WTC11 (cell line): ENCODE measurements at regions of chr17 and their contacts with region 1.

Region 1: DNA sequence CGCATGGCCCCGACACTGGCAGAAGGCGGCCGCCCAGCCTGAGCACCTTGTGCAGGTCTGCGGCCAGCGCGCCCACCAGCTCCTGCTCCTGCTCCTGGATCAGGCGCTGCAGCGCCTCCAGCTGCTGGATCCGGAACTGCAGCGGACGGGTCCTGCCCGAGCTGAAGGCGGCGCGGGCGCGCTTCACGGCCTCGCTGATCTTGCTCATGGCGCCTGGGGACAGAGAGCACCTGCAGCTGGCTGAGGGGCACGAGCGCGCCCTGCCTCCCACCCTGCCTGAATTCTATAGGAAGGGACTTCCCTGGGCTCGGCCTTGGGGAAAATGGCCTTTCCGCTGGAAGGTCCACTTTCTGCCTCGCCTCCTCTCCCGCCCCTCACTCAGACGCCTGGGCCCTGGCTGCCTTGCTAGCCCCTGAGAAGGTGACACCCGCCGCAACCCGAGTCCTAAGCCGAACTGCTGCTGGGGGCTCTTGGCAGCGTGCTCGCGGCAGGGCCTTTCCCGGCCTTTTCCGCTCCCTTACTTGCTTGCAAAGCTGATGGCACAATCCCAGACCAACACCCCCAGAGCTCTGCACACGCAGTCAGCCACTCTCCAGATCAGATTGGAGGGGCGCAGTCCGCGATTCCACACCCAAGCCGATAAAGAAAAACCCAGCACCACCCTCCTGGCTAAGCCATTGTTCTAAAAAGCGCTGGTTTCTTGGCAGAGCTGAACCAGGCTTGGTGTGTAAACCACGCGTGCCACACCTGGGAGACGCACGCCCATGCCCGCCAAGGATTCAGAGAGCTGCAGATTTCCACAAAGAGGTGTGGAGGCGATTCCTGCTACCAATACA is 3.0 kb downstream of the ALDH3A1 start:
- DNase-seq: peak; percentile 99
- ATAC-seq: peak; percentile 92
- H3K4me3 Mint-ChIP-seq: peak overlapping the region; percentile 54
- H3K27ac Mint-ChIP-seq: no peak overlapping the region
- H3K4me1 Mint-ChIP-seq: peaks cover 22% of the 10 kb centered on the region
- H3K27me3 Mint-ChIP-seq: peaks cover 13% of the 10 kb centered on the region; the same call in 1 of the 2 replicates
- CTCF ChIP-seq: peak; percentile 97

Region 2: GRCh38 chr17:19377602-19378392 is 367.3 kb before region 1 on chr17:
- CTCF ChIA-PET with region 1: interaction called, 12 read pairs
- POLR2A ChIA-PET with region 1: no interaction called
- DNase-seq: peak; percentile 99
- ATAC-seq: peak; percentile 93
- H3K4me3 Mint-ChIP-seq: peak overlapping the region; percentile 99
- H3K27ac Mint-ChIP-seq: peak overlapping the region; percentile 97
- H3K4me1 Mint-ChIP-seq: peaks cover 16% of the 10 kb centered on the region
- H3K27me3 Mint-ChIP-seq: no peaks in the 10 kb centered on the region
- CTCF ChIP-seq: no peak

Region 3: GRCh38 chr17:19533718-19534561 is 211.2 kb before region 1 on chr17 and contains the start of gene SLC47A1:
- CTCF ChIA-PET with region 1: interaction called, 12 read pairs
- POLR2A ChIA-PET with region 1: interaction called, 3 read pairs
- DNase-seq: peak; percentile 42
- ATAC-seq: peak; percentile 83
- H3K4me3 Mint-ChIP-seq: peak within 1 kb of the TSS; percentile 71
- H3K27ac Mint-ChIP-seq: no peak within 1 kb of the TSS
- H3K4me1 Mint-ChIP-seq: peaks cover 35% of the 10 kb centered on the region
- H3K27me3 Mint-ChIP-seq: peaks cover 43% of the 10 kb centered on the region
- CTCF ChIP-seq: no peak
- total RNA-seq, gene SLC47A1: 2.5 to 3.3 TPM (median 2.9 TPM) in 3 replicates

Region 4: DNA sequence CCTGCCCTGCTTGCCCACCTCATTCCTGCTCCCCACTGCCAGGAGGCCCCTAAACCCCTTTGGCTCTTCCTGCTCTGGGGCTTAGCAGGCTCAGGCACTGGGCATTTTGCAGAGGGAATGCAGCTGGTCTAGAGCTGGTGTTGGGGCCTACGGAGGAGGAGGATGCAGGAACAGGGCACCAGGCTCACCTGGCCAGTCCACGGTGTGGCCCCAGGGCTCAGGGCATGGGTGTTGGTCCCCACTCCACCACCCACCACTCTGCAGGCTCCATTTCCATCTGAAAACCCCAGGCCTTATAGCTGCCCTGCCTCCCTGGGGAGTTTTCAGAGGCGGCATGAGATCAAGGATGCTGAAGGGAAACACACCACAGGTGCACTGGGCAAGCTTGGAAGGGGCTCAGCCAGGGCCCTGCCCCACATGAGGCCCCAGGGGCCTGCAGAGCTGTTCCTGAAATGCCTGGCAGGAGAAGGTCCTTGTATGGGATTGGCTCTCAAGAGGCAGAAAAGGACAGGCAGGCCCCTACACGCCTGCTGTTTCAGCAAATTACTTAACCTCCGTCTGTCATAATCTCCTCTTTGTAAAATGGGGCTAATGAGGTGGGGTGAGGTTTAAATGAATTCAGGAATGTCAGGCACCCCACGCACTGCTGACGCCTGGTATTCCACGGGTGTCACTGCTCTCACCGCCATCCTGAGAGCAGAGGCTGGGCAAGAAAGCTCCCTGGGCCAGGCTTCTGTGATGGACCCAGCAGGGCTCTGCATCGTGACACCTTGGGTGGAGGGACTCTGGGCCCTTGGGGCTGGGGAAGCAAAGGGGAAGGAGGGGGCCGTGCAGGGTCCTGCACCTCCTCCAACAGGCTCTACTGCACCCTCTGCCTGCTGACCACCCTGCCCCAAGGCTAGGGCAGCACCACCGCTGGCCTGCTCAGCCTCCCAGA is 38.1 kb before region 1 on chr17:
- CTCF ChIA-PET with region 1: interaction called, 14 read pairs
- POLR2A ChIA-PET with region 1: no interaction called
- DNase-seq: no peak
- ATAC-seq: no peak
- H3K4me3 Mint-ChIP-seq: no peak overlapping the region
- H3K27ac Mint-ChIP-seq: no peak overlapping the region
- H3K4me1 Mint-ChIP-seq: peaks cover 25% of the 10 kb centered on the region
- H3K27me3 Mint-ChIP-seq: no peaks in the 10 kb centered on the region
- CTCF ChIP-seq: no peak

Region 5: DNA sequence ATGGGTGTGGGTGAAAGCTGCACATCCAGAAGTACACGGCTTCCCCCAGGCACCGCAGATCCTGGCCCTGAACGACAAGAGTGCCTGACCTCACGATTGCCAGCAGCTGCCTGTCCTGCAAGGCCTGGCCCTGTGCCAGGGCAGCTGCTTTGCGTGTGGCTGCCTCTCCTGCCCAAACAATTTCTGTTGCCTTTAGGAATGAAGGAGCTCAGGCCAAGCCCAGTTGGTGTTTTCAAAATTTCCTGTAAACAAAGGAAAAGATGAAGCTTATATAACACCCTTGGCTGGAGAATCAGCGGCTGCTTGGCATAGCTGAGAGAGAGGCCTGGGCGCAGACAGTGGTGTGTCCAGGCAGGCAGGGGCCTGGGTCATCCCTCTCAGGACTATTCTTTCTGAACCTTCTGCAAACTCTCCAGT is 17.1 kb before region 1 on chr17:
- CTCF ChIA-PET with region 1: interaction called, 21 read pairs
- POLR2A ChIA-PET with region 1: no interaction called
- DNase-seq: no peak
- ATAC-seq: no peak
- H3K4me3 Mint-ChIP-seq: no peak overlapping the region
- H3K27ac Mint-ChIP-seq: no peak overlapping the region
- H3K4me1 Mint-ChIP-seq: no peaks in the 10 kb centered on the region
- H3K27me3 Mint-ChIP-seq: no peaks in the 10 kb centered on the region; the same call in none of the 2 replicates
- CTCF ChIP-seq: no peak